K562 (cell line): ENCODE measurements at regions of chr7 and their contacts with region 1.

Region 1: DNA sequence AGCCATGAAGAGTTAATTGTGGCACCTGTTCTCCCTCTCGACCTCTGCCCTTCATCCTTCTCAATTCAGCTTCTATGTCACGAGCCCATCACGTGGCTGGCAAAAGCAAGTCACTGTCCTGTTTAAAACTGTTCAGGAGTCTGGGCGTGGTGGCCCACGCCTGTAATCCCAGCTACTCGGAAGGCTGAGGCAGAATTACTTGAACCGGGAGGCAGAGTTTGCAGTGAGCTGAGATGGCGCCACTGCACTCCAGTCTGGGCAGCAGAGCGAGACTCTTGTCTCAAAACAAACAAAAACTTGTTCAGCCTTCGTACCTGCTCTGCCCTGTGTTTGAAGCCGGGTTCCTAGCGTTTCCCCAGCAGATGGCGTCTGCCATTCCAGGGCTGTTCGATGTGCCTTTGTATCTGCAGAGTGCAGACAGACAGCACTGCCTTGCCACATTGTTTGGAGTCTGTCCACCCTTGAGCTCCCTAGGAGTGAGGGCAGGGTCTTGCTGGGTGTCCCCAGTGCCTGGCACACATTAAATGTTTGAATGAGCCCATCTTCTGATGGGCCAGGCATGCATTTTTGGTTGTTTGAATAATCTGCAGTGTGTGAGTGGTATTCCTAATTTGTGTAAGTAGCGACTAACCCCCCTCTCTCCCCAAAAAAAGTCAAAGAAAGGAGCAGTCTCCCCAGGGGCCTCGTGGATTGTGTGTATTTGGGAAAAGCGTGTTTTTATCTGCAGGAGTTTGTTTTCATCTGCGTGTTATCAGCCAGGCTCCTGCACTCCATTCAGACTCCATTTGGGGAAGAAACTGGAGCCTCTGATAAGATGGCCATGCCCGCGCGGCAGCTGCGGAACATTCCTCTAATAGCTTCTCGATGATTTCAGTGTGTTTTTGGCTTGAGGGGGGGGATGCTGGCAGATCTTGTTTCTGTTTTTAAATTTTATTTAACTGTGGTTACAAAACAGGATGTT is 61.2 kb downstream of the DNAJB6 start:
- DNase-seq: peak; percentile 57 to 92 (median 72)
- ATAC-seq: peak; percentile 84
- H3K4me3 ChIP-seq: peak overlapping the region; percentile 1; the same call in 1 of the 2 replicates
- H3K27ac ChIP-seq: peak overlapping the region; percentile 74
- H3K4me1 ChIP-seq: peaks cover 36 to 69% of the 10 kb centered on the region in 2 experiments
- H3K27me3 ChIP-seq: no peaks in the 10 kb centered on the region
- CTCF ChIP-seq: peak; percentile 85 to 90 (median 86)
- EP300 ChIP-seq: peak; percentile 92
- POLR2A ChIP-seq: no peak; the same call in none of the 2 replicates
- RAD21 ChIP-seq: peak; percentile 45 to 71

Region 2: DNA sequence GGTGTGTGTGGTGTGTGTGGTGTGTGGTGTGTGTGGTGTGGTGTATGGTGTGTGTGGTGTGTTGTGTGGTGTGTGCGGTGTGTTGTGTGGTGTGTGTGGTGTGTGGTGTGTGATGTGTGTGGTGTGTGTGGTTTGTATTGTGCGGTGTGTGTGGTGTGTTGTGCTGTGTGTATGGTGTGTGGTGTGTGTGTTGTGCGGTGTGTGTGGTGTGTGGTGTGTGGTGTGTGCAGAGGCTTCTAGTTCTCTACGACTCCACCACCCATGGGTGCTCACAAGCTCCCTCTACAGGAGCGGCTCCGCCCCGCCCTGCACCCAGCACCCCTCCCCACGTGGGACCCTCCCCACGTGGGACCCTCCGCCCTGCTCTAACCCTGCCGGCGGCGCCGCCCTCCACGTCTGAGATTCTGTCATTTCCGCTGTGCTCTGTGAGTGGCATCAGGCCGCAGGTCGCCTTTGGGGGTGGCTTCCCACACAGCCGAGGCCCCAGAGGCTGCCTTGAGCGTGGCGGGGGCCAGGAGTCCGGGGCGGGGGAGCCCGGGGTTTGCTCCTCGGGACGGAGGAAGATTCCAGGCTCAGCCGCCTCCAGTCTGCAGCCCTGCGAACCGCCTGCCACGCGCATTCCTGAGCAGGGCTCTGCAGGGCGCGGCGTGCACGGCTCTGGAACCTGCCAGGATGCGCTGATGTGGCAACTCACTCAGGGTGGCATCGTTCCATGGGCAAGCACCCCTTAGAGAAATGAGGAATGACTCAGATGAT is 98.2 kb before region 1 on chr7:
- CTCF ChIA-PET with region 1: no interaction called
- POLR2A ChIA-PET with region 1: interaction called, 3 read pairs
- in situ Hi-C with region 1: no loop called
- intact Hi-C with region 1: loop called (anchors 5 kb)
- DNase-seq: peak; percentile 66 to 81 (median 80)
- ATAC-seq: peak; percentile 72
- H3K4me3 ChIP-seq: no peak overlapping the region
- H3K27ac ChIP-seq: no peak overlapping the region; the same call in 2 of the 3 replicates
- H3K4me1 ChIP-seq: peaks cover 17 to 31% of the 10 kb centered on the region in 2 experiments; a peak in 4 of 5 replicates
- H3K27me3 ChIP-seq: peaks cover 11 to 14% of the 10 kb centered on the region in 2 experiments; a peak in 4 of 5 replicates
- CTCF ChIP-seq: peak; percentile 55 to 72 (median 70)
- EP300 ChIP-seq: no peak
- POLR2A ChIP-seq: no peak
- RAD21 ChIP-seq: no peak

Region 3: DNA sequence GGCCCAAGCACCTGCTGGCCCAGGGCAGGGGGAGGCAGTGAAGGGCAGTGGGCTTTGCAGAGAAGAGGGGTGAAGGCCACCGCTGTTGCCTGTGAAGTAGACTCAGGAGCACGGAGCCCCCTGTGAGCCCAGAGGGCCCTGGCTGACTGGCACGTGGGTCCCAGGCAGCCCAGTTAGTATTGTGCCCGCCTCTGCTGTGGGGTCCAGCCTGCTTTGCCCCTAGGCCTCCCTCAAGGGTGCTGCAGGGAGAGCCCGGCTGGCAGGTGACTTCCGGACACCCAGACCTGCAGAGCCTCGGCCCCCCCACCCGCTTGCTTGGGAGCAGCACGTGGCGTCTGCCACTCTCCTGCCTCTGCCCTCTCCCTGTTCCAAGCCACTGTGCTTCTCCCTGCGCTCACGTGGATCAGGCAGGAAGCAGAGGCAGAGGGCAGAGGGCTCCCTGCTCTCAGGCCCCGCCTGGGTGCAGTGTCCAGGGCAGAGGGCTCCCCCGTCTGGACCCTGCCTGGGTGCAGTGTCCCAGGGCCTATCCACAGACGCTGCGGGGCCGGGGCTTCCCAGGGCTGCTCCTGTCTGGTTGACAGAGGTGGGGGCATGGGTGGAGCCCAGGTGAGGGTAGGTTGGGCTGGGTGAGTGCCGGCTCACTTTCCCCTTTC is 27.2 kb after region 1 on chr7:
- CTCF ChIA-PET with region 1: no interaction called
- POLR2A ChIA-PET with region 1: no interaction called
- in situ Hi-C with region 1: no loop called
- intact Hi-C with region 1: no loop called
- DNase-seq: peak in 2 of 4 experiments; percentile 37 to 49
- ATAC-seq: peak; percentile 86
- H3K4me3 ChIP-seq: no peak overlapping the region
- H3K27ac ChIP-seq: no peak overlapping the region
- H3K4me1 ChIP-seq: peaks cover 0 to 56% of the 10 kb centered on the region in 2 experiments; a peak in 2 of 5 replicates
- H3K27me3 ChIP-seq: peaks cover 20 to 39% of the 10 kb centered on the region in 2 experiments; a peak in 4 of 5 replicates
- CTCF ChIP-seq: peak; percentile 38 to 54 (median 49); a peak in 5 of 6 replicates
- EP300 ChIP-seq: no peak
- POLR2A ChIP-seq: no peak
- RAD21 ChIP-seq: peak in 1 of 2 experiments; percentile 56; a peak in 3 of 4 replicates